Psoas muscle (tissue), 8 donors: ENCODE measurements at regions of chr4 and their contacts with region 1.

Region 1: DNA sequence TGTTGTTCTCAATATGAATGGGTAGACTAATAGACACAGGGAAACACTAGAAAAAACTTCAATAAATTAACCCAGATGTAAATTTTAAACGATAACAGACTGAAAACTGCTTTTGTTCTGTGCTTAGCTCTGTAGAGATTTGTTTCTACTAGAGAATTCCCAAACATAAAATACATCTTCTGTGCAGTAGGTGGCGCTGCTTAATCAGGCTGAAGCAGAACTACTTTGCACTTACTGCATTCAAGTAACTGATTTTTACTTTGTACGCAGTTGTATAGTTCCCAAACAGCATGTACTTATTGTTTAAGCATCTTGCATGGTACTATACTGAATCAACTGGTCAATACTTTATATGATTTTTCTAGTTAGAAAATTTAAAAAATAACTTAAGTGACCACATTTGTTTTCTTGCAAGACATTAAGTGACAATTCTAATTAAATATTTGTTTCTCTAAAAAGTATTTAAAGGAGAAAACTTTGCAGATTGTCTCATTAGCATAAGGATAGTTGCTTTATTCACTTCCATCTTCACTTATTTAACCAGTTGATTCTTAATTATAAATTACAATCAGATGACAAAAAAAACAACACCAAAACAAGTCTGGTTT is 490.6 kb downstream of the IL15 start:
- DNase-seq: no peak
- ATAC-seq: peak; percentile 59 to 86 (median 74)
- H3K4me3 ChIP-seq: no peak overlapping the region
- H3K27ac ChIP-seq: no peak overlapping the region
- H3K4me1 ChIP-seq: no peaks in the 10 kb centered on the region
- H3K27me3 ChIP-seq: no peaks in the 10 kb centered on the region
- CTCF ChIP-seq: peak; percentile 87

Region 2: DNA sequence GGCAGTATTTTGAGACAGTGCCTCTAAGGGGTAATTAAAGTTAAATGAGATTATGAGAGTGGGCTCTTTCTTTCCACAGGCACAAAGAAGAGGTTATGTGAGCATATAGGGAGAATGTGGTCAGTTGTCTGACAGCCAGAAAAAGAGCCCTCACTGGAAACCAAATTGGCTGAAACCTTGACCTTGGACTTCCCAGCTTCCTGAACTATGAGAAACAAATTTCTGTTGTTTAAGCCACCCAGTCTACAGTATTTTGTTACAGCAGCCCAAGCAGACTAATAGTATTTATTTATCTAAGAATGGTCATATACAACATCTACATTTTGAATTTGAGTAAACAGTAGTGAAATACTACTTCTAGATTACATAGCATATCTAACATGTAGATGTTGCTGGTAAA is 16.9 kb before region 1 on chr4:
- intact Hi-C with region 1: no loop called
- DNase-seq: no peak
- ATAC-seq: no peak
- H3K4me3 ChIP-seq: no peak overlapping the region
- H3K27ac ChIP-seq: no peak overlapping the region
- H3K4me1 ChIP-seq: no peaks in the 10 kb centered on the region
- H3K27me3 ChIP-seq: no peaks in the 10 kb centered on the region
- CTCF ChIP-seq: no peak

Region 3: GRCh38 chr4:142282870-142283431 is 156.0 kb after region 1 on chr4:
- intact Hi-C with region 1: no loop called
- DNase-seq: no peak
- ATAC-seq: no peak
- H3K4me3 ChIP-seq: no peak overlapping the region
- H3K27ac ChIP-seq: no peak overlapping the region
- H3K4me1 ChIP-seq: no peaks in the 10 kb centered on the region
- H3K27me3 ChIP-seq: no peaks in the 10 kb centered on the region
- CTCF ChIP-seq: no peak

Region 4: GRCh38 chr4:142719854-142720541 is 593.0 kb after region 1 on chr4:
- intact Hi-C with region 1: loop called in 1 of 2 experiments (anchors 5 kb)
- DNase-seq: no peak
- ATAC-seq: no peak
- H3K4me3 ChIP-seq: no peak overlapping the region
- H3K27ac ChIP-seq: no peak overlapping the region
- H3K4me1 ChIP-seq: no peaks in the 10 kb centered on the region
- H3K27me3 ChIP-seq: no peaks in the 10 kb centered on the region
- CTCF ChIP-seq: peak; percentile 42

Region 5: GRCh38 chr4:142840516-142841123 is 713.6 kb after region 1 on chr4:
- intact Hi-C with region 1: loop called in 1 of 2 experiments (anchors 2 kb)
- DNase-seq: no peak
- ATAC-seq: peak in 2 of 4 donors; percentile 50 to 71
- H3K4me3 ChIP-seq: no peak overlapping the region
- H3K27ac ChIP-seq: no peak overlapping the region
- H3K4me1 ChIP-seq: peaks cover 4% of the 10 kb centered on the region
- H3K27me3 ChIP-seq: no peaks in the 10 kb centered on the region
- CTCF ChIP-seq: peak; percentile 68